Endothelial cell of umbilical vein (primary cell): ENCODE measurements at regions of chr2 and their contacts with region 1.

Region 1: DNA sequence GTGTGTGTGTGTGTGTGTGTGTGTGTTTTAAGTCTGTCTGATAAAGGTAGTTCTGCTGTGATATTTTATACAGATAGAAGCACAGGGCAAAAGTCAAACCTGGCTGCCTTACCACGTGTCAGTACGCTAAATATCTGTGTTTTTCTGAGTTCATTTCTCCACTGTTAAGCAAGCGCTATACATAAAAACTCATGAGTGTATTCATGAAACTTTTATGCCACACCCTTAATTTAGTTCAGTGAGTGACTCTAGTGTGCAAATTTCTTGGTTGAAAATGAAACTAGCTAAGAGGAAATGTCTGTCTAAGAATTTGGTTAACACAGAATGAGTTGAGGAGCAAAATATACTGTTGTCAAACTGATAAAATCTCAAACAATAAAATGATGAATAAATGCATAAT is 11.2 kb downstream of the CASP10 start:
- DNase-seq: no peak
- H3K4me3 ChIP-seq: no peak overlapping the region
- H3K27ac ChIP-seq: no peak overlapping the region
- H3K4me1 ChIP-seq: peaks cover 35% of the 10 kb centered on the region
- H3K27me3 ChIP-seq: no peaks in the 10 kb centered on the region
- CTCF ChIP-seq: no peak
- POLR2A ChIP-seq: no peak

Region 2: GRCh38 chr2:200975672-200976071 is 218.4 kb before region 1 on chr2:
- CTCF ChIA-PET with region 1: no interaction called
- POLR2A ChIA-PET with region 1: no interaction called
- dilution Hi-C with region 1: no loop called
- intact Hi-C with region 1: no loop called
- DNase-seq: peak; percentile 17
- H3K4me3 ChIP-seq: no peak overlapping the region
- H3K27ac ChIP-seq: no peak overlapping the region
- H3K4me1 ChIP-seq: no peaks in the 10 kb centered on the region
- H3K27me3 ChIP-seq: no peaks in the 10 kb centered on the region
- CTCF ChIP-seq: no peak
- POLR2A ChIP-seq: no peak

Region 3: GRCh38 chr2:201208563-201209252 is 14.6 kb after region 1 on chr2:
- CTCF ChIA-PET with region 1: interaction called, 3 read pairs
- POLR2A ChIA-PET with region 1: no interaction called
- dilution Hi-C with region 1: no loop called
- intact Hi-C with region 1: loop called (anchors 2 kb)
- DNase-seq: no peak
- H3K4me3 ChIP-seq: no peak overlapping the region
- H3K27ac ChIP-seq: no peak overlapping the region
- H3K4me1 ChIP-seq: peaks cover 7% of the 10 kb centered on the region
- H3K27me3 ChIP-seq: no peaks in the 10 kb centered on the region
- CTCF ChIP-seq: no peak
- POLR2A ChIP-seq: no peak

Region 4: GRCh38 chr2:201220102-201220570 is 26.0 kb after region 1 on chr2:
- CTCF ChIA-PET with region 1: interaction called, 12 read pairs
- POLR2A ChIA-PET with region 1: no interaction called
- dilution Hi-C with region 1: no loop called
- intact Hi-C with region 1: loop called (anchors 1 kb)
- DNase-seq: peak; percentile 92
- H3K4me3 ChIP-seq: no peak overlapping the region
- H3K27ac ChIP-seq: peak overlapping the region; percentile 53
- H3K4me1 ChIP-seq: peaks cover 26% of the 10 kb centered on the region
- H3K27me3 ChIP-seq: no peaks in the 10 kb centered on the region
- CTCF ChIP-seq: no peak
- POLR2A ChIP-seq: no peak